MCF 10A (cell line): ENCODE measurements at regions of chr9 and their contacts with region 1.

Region 1: GRCh38 chr9:121267689-121268597 is at the start of gene GSN:
- DNase-seq: peak; percentile 49
- H3K4me3 Mint-ChIP-seq: peak within 1 kb of the TSS; percentile 75
- H3K27ac Mint-ChIP-seq: peak within 1 kb of the TSS; percentile 80
- H3K4me1 Mint-ChIP-seq: peaks cover 18% of the 10 kb centered on the region
- H3K27me3 Mint-ChIP-seq: no peaks in the 10 kb centered on the region
- CTCF ChIP-seq: no peak
- total RNA-seq, gene GSN: 21.9 and 24.9 TPM in 2 replicates

Region 2: DNA sequence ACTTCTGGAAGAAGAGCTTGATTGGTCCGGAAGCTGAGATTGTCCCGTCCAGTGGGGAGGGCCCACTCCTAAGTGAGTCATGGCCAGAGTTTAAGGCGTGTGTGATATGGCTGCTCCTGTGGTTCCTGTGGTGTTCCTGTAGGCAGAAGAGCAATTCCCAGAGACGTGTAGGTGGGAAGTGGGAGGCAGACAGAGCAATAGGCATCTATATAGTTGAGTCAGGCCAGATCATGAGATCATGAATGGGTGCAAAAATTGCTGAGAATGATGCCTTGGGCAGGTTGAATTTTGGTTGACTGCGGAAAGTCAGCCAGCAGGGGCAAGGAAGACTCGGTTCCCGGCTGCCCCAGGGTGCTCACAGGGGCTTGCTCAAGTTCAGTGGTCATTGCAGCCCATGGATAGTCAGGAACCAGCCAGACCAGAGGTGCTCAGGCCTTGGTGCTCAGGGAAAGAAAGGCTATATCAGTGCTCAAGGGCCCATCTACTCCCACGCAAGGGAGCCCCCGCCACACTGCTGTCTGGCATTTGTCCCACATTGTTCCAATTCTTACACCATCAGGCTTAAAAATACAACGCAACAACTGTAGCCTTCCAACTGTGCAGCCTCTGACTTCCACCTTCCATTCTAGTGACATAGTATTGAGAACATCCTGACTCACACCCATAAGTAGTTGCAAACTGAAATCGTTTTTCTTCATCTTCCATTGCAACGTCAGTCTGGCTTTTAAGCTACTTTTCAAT is 21.0 kb before region 1 on chr9:
- CTCF ChIA-PET with region 1: no interaction called
- POLR2A ChIA-PET with region 1: interaction called, 19 read pairs
- intact Hi-C with region 1: no loop called
- DNase-seq: peak; percentile 55
- H3K4me3 Mint-ChIP-seq: no peak overlapping the region
- H3K27ac Mint-ChIP-seq: no peak overlapping the region
- H3K4me1 Mint-ChIP-seq: peaks cover 6% of the 10 kb centered on the region
- H3K27me3 Mint-ChIP-seq: no peaks in the 10 kb centered on the region
- CTCF ChIP-seq: no peak

Region 3: DNA sequence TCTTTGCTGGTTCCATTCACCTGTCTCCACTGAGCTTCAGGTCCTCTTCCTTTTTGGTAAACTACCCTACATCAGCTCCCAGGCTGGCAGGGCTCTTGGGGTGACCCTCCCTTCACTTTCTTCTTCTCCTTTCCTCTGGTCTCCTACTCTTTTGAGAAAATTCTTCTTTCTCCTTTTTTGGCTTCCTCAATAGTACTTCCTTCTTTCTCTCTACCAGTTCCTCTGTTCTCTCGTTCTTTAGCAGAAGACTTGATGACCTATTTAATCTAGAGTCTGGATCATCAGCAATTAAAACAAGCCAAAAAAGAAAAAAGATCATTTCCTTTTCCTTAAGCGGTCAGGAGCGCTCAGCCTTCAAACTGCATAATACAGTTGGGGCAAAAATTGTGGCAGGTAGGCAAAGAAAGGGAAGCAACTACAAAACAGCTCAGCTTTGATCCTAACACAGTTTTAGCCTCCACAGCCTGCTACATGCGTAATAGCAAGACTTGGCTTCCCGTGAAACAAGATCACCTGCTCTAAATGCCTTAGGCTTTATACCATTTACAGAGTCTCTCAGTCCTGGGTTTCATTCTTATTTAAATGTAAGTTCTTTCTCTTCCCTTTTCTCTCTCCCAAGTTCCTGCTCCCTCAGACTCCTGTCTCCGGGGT is 14.0 kb before region 1 on chr9:
- CTCF ChIA-PET with region 1: interaction called, 3 read pairs
- POLR2A ChIA-PET with region 1: interaction called, 12 read pairs
- intact Hi-C with region 1: no loop called
- DNase-seq: no peak
- H3K4me3 Mint-ChIP-seq: no peak overlapping the region
- H3K27ac Mint-ChIP-seq: no peak overlapping the region
- H3K4me1 Mint-ChIP-seq: peaks cover 6% of the 10 kb centered on the region
- H3K27me3 Mint-ChIP-seq: no peaks in the 10 kb centered on the region
- CTCF ChIP-seq: no peak

Region 4: DNA sequence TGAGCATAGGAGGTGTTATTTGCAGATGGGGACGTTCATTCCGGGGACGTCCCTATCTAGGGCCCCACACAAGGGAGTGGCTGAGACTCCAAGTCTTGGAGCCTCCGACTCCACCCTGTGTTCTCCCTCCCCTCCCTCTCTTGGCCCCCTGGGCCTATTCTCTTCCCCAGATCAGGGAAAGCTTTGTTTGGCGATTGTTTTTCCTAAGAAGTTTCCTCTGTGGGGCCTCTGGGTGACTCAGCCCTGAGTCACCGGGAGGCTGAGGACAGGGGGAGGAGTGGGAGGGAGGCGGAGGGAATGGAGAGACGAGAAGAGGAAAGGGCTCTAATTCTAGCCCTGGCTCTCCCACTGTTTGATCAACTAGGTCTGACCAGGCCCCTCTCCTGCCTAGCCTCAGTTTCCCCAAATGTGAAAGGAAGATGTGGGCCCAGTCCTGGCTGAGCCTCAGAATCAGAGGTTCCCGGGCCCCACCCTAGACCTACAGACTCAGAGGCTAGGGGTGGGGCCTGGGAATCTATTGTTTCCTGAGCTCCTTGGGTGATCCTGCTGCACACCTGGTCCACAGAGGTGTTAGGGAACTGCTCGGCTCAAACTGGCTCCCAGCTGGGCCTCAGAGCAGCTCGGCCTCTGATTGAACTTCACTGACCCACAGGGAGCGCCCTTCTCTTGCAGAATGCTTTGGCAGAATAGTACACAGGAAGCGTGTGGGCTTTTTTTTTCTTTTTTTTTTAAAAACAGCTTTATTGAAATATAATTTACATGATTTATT is 19.2 kb after region 1 on chr9:
- CTCF ChIA-PET with region 1: interaction called, 11 read pairs
- POLR2A ChIA-PET with region 1: interaction called, 40 read pairs
- intact Hi-C with region 1: no loop called
- DNase-seq: peak; percentile 99
- H3K4me3 Mint-ChIP-seq: peak overlapping the region; percentile 32
- H3K27ac Mint-ChIP-seq: peak overlapping the region; percentile 80
- H3K4me1 Mint-ChIP-seq: peaks cover 70% of the 10 kb centered on the region
- H3K27me3 Mint-ChIP-seq: no peaks in the 10 kb centered on the region
- CTCF ChIP-seq: peak; percentile 14